ENCODE measurements at regions of chr9 and their contacts with region 1.

Region 1: DNA sequence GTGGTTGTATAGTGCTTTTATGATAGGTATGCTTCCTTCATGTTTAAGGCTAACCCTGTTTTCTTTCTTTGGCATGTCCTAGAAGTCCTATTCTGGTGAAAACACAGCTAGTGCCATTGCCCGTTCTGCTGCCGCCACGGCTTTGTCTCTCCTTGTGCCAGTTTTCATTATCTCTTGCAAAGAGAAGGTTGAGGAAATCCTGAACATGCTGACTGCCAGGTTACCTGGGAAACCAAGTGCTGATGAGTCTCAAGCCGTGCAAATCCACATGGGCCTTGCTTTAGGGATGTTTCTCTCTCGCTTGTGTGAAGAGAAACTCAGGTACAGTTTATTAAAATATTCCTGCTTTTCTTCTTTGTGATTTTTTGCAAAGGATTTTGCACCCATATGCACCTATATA is 102.2 kb downstream of the HACD4 start:
- DNase-seq: no peak
- H3K4me3 ChIP-seq: no peak overlapping the region
- H3K27ac ChIP-seq: no peak overlapping the region
- H3K4me1 ChIP-seq: no peaks in the 10 kb centered on the region
- H3K27me3 ChIP-seq: no peaks in the 10 kb centered on the region
- CTCF ChIP-seq: no peak
- EP300 ChIP-seq: no peak
- POLR2A ChIP-seq: no peak

Region 2: GRCh38 chr9:20349568-20349967 is 579.7 kb before region 1 on chr9:
- intact Hi-C with region 1: loop called (anchors 5 kb)
- DNase-seq: no peak
- H3K4me3 ChIP-seq: no peak overlapping the region
- H3K27ac ChIP-seq: no peak overlapping the region
- H3K4me1 ChIP-seq: peaks cover 0 to 14% (median 5%) of the 10 kb centered on the region in 4 donors
- H3K27me3 ChIP-seq: no peaks in the 10 kb centered on the region
- CTCF ChIP-seq: no peak
- EP300 ChIP-seq: no peak
- POLR2A ChIP-seq: no peak

Measured in sigmoid colon (tissue), 7 donors.